Body of pancreas (tissue), 4 donors: ENCODE measurements at regions of chr20 and their contacts with region 1.

Region 1: DNA sequence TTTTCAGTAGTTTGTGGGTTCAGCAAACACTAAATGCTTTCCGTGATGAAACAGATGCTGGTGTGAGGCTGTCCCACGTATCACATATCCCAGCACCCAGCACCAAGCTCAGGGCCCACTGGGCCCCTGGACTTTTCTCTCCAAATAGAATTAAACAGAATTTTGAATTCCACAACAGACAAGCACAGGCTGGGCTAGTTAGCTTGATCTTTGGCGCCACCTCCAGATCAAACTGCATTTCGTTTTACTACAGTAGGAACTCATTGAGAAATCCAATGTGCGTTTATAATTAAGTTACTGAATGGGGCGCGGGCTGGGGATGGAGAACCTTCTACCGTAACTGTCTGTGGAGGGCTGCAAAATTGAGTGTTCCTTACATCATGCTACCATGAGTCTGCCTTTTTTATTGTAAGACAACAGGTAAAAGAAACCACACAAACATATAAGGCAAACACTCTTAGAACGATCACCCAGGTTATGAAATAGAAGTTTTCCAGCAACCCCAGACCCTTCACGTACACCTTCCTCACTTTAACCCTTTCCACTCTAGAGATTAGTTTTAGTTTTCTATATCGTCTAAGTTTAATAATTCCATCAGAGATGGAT is 107.8 kb downstream of the ZFP64 start:
- DNase-seq: peak; percentile 43 to 57 (median 53)
- ATAC-seq: no peak
- H3K4me3 ChIP-seq: no peak overlapping the region
- H3K27ac ChIP-seq: no peak overlapping the region
- H3K4me1 ChIP-seq: no peaks in the 10 kb centered on the region
- H3K27me3 ChIP-seq: no peaks in the 10 kb centered on the region
- CTCF ChIP-seq: peak in 6 of 7 experiments; percentile 22 to 57 (median 45)
- POLR2A ChIP-seq: no peak

Region 2: GRCh38 chr20:51643390-51643789 is 440.3 kb before region 1 on chr20:
- intact Hi-C with region 1: loop called (anchors 10 kb)
- DNase-seq: no peak
- ATAC-seq: no peak
- H3K4me3 ChIP-seq: no peak overlapping the region
- H3K27ac ChIP-seq: no peak overlapping the region
- H3K4me1 ChIP-seq: no peaks in the 10 kb centered on the region
- H3K27me3 ChIP-seq: no peaks in the 10 kb centered on the region
- CTCF ChIP-seq: no peak
- POLR2A ChIP-seq: no peak

Region 3: DNA sequence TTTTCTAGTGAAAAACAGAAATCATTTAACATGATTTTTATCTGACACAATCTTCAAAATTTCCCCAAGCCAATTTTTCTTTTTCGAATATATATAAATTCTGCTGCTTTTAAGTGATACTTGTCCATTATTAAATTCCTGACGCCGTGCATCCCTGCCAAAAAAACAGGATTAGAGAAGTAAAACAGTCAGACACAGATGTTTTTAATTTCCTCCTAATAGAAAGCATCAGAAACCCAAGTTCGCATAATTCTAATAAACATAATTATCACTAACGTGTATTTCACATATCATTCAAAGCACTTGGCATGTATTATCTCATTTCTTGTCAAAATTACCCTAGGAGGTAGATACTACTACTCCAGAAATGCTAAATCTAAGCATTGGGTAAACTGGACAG is 71.7 kb before region 1 on chr20:
- intact Hi-C with region 1: no loop called
- DNase-seq: no peak
- ATAC-seq: no peak
- H3K4me3 ChIP-seq: no peak overlapping the region
- H3K27ac ChIP-seq: no peak overlapping the region
- H3K4me1 ChIP-seq: no peaks in the 10 kb centered on the region
- H3K27me3 ChIP-seq: no peaks in the 10 kb centered on the region
- CTCF ChIP-seq: no peak
- POLR2A ChIP-seq: no peak

Region 4: GRCh38 chr20:52031563-52032303 is 52.0 kb before region 1 on chr20:
- intact Hi-C with region 1: no loop called
- DNase-seq: no peak
- ATAC-seq: no peak
- H3K4me3 ChIP-seq: no peak overlapping the region
- H3K27ac ChIP-seq: peak overlapping the region in 3 of 4 donors; percentile 4 to 53 (median 27)
- H3K4me1 ChIP-seq: peaks cover 4% of the 10 kb centered on the region
- H3K27me3 ChIP-seq: no peaks in the 10 kb centered on the region
- CTCF ChIP-seq: no peak
- POLR2A ChIP-seq: no peak